Dendritic cell treated with granulocyte-macrophage colony-stimulating factor and Interleukin-4, amounts not matched to agents 40 ng/mL and 50 ng/mL, for 4 days (primary cell): ENCODE measurements at regions of chr9 and their contacts with region 1.

Region 1: GRCh38 chr9:10228082-10228481 is 384.7 kb downstream of the PTPRD start:
- H3K4me3 Mint-ChIP-seq: no peak overlapping the region
- H3K27ac Mint-ChIP-seq: no peak overlapping the region
- H3K4me1 Mint-ChIP-seq: no peaks in the 10 kb centered on the region
- H3K27me3 Mint-ChIP-seq: no peaks in the 10 kb centered on the region

Region 2: DNA sequence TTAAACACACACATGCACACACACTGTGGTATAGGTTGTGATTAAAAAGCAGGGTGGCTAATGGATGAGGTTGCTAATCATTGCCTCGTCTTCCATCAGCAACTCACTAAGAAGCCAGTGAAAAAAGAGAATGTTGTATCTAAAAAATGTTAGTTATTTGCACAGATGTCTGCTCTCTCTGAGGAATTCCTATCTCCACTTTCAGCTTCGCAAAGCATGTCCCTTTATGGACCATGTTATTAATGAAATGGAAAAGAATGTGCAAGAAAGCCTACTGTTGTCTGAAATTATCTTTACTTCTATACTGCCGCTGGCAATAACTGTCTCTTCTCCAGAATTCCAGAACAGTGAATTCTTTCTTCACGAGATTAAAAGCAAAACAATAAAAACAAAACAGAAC is 779.3 kb before region 1 on chr9:
- intact Hi-C with region 1: no loop called
- H3K4me3 Mint-ChIP-seq: no peak overlapping the region
- H3K27ac Mint-ChIP-seq: no peak overlapping the region
- H3K4me1 Mint-ChIP-seq: no peaks in the 10 kb centered on the region
- H3K27me3 Mint-ChIP-seq: no peaks in the 10 kb centered on the region

Region 3: GRCh38 chr9:9942764-9943424 is 285.2 kb before region 1 on chr9:
- intact Hi-C with region 1: no loop called
- H3K4me3 Mint-ChIP-seq: no peak overlapping the region
- H3K27ac Mint-ChIP-seq: no peak overlapping the region
- H3K4me1 Mint-ChIP-seq: no peaks in the 10 kb centered on the region
- H3K27me3 Mint-ChIP-seq: no peaks in the 10 kb centered on the region

Region 4: DNA sequence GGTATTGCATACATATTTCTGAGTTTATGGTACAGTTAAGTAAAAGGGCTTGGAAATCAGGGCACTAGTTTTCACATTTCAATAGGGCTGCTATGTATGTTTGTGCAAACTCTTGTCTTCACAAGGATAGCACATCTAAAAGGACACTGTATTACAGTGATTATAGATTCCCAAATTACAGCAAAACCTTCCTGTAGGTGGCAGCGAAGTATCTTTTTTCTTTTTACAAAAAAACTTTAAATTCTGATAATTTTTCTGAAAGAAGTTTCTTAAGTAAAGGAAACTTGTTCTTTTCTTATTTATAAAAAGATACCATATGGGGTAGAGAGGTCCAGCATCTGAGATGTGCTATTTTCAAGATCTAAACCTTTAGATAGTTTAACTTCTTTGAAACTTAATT is 46.9 kb after region 1 on chr9:
- intact Hi-C with region 1: no loop called
- H3K4me3 Mint-ChIP-seq: no peak overlapping the region
- H3K27ac Mint-ChIP-seq: no peak overlapping the region
- H3K4me1 Mint-ChIP-seq: no peaks in the 10 kb centered on the region
- H3K27me3 Mint-ChIP-seq: no peaks in the 10 kb centered on the region

Region 5: DNA sequence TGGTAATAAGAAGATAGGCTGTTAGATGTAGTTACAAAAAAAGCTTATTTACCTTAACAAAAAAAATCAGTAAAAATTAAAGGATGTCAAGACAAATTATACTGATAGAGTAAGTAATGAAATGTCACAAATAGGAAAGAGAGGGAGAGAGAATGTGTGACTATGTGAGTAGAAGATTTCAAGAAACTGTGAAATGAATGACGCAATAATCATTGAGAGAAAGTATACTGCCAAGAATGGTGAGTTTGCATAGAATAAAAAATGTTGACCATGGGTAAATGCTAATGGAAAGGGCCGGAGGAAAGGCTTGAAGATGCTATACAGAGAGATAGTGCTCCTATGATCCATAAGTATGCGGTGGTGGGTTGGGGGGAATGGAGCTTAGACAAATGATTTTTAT is 284.1 kb after region 1 on chr9:
- intact Hi-C with region 1: no loop called
- H3K4me3 Mint-ChIP-seq: no peak overlapping the region
- H3K27ac Mint-ChIP-seq: no peak overlapping the region
- H3K4me1 Mint-ChIP-seq: no peaks in the 10 kb centered on the region
- H3K27me3 Mint-ChIP-seq: no peaks in the 10 kb centered on the region

Region 6: DNA sequence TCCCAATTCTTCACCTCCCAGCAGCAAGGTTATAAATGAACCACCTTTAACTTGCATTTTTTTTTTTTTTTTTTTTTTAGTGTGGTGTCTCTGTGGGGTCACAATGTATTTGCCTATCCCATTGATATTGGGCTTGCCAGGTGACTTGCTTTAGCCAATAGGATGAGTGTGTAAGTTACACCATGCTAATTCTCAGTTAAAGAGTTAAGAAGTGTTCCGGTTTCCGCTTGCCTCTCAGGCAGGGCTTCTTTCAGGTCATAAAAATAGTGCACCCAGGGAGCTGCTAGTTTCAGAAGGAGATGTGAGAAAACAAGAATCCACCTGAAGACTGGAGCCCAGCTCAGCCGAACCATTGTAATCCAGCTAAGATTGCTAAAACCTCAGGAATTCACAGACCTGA is 469.0 kb after region 1 on chr9:
- intact Hi-C with region 1: loop called (anchors 10 kb)
- H3K4me3 Mint-ChIP-seq: no peak overlapping the region
- H3K27ac Mint-ChIP-seq: no peak overlapping the region
- H3K4me1 Mint-ChIP-seq: no peaks in the 10 kb centered on the region
- H3K27me3 Mint-ChIP-seq: no peaks in the 10 kb centered on the region